Right lobe of liver (tissue), 6 donors: ENCODE measurements at regions of chr17 and their contacts with region 1.

Region 1: DNA sequence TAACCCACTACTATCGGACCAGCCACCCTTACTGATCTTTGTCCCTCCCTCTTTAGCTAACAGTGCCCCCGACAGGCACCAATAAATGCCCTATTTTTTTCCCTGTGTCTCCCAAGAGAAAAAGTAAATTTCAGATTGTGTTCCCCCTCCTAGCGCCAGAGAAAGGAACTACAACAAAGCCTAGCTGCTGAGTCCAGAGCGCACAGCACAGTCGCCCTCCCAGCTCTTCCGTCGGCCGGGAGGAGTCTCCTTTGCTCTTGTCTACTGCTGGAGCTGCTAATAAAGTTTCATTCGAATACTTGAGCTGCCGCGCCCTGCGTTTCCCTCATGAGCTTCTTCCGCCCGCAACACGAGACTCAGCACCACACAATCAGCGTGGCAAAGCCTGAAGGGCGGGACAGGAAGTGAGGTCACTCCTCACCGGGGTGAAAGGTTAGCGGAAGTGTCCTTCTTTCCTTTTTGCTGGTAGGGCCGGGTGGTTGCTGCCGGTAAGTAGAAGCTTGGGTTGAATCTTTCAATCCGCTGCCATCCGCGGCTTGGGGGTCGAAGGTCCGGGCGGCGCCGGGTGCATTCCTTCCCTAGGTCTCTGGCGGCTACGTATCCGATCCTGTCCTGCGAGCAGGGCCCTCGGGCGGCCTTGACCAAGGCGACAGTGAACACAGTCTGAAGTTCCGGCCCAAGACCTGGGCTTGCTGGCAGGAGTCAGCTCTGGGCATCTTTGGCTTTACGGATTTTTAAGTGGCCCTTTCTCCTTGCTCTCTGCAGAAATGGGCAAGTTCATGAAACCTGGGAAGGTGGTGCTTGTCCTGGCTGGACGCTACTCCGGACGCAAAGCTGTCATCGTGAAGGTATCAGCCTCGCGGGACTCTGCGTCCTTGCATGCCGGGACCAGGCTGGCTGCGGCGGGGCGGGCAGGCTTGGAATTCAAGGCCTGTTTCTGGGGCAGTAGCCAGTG is at the start of gene RPL27:
- DNase-seq: peak; percentile 96 to 98 (median 98)
- ATAC-seq: peak; percentile 95 to 97 (median 96)
- H3K4me3 ChIP-seq: peak within 1 kb of the TSS; percentile 75 to 87 (median 79)
- H3K27ac ChIP-seq: peak within 1 kb of the TSS; percentile 71 to 85 (median 71)
- H3K4me1 ChIP-seq: peaks cover 0 to 18% (median 9%) of the 10 kb centered on the region in 4 donors
- H3K27me3 ChIP-seq: no peaks in the 10 kb centered on the region
- CTCF ChIP-seq: peak; percentile 77 to 92 (median 88)
- POLR2A ChIP-seq: peak; percentile 77
- total RNA-seq, gene RPL27: 229 to 528 (median 316) TPM

Region 2: DNA sequence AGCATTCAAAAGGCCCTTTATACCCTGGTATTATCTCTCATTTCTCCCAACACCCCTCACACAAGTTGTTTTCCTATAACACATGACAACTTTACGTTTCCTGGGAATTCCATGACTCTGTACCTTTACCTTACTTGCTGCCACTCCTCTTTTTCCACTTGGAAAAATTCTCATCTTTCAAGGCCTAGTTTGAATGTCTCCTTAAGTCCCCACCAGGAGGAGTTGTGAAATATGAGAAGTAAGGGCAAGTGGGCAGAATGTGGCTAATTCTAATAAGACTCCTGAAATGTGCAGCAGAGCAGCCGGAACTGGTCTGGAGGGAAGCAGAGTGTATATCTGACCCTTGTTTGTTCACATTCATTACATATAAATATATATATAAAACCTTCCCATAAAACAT is 87.2 kb after region 1 on chr17:
- intact Hi-C with region 1: no loop called
- DNase-seq: no peak
- ATAC-seq: no peak
- H3K4me3 ChIP-seq: no peak overlapping the region
- H3K27ac ChIP-seq: no peak overlapping the region
- H3K4me1 ChIP-seq: peaks cover 0 to 14% (median 0%) of the 10 kb centered on the region in 4 donors
- H3K27me3 ChIP-seq: no peaks in the 10 kb centered on the region
- CTCF ChIP-seq: no peak
- POLR2A ChIP-seq: no peak

Region 3: GRCh38 chr17:43125133-43125966 is 127.1 kb after region 1 on chr17 and contains the start of gene BRCA1:
- intact Hi-C with region 1: loop called in 1 of 2 experiments (anchors 10 kb)
- DNase-seq: peak; percentile 91 to 95 (median 94)
- ATAC-seq: peak; percentile 98 to 99 (median 99)
- H3K4me3 ChIP-seq: peak within 1 kb of the TSS; percentile 39 to 69 (median 52)
- H3K27ac ChIP-seq: peak within 1 kb of the TSS; percentile 63 to 82 (median 67)
- H3K4me1 ChIP-seq: peaks cover 0 to 21% (median 3%) of the 10 kb centered on the region in 4 donors
- H3K27me3 ChIP-seq: no peaks in the 10 kb centered on the region
- CTCF ChIP-seq: no peak
- POLR2A ChIP-seq: peak; percentile 70
- total RNA-seq, gene BRCA1: 3.1 to 6.7 (median 3.9) TPM